MCF 10A (cell line): ENCODE measurements at regions of chr5 and their contacts with region 1.

Region 1: GRCh38 chr5:168291464-168291961 is at the start of gene WWC1:
- DNase-seq: peak; percentile 88
- H3K4me3 Mint-ChIP-seq: peak within 1 kb of the TSS; percentile 82
- H3K27ac Mint-ChIP-seq: peak within 1 kb of the TSS; percentile 81
- H3K4me1 Mint-ChIP-seq: peaks cover 51% of the 10 kb centered on the region
- H3K27me3 Mint-ChIP-seq: no peaks in the 10 kb centered on the region
- CTCF ChIP-seq: no peak
- total RNA-seq, gene WWC1: 27.8 and 47.0 TPM in 2 replicates

Region 2: DNA sequence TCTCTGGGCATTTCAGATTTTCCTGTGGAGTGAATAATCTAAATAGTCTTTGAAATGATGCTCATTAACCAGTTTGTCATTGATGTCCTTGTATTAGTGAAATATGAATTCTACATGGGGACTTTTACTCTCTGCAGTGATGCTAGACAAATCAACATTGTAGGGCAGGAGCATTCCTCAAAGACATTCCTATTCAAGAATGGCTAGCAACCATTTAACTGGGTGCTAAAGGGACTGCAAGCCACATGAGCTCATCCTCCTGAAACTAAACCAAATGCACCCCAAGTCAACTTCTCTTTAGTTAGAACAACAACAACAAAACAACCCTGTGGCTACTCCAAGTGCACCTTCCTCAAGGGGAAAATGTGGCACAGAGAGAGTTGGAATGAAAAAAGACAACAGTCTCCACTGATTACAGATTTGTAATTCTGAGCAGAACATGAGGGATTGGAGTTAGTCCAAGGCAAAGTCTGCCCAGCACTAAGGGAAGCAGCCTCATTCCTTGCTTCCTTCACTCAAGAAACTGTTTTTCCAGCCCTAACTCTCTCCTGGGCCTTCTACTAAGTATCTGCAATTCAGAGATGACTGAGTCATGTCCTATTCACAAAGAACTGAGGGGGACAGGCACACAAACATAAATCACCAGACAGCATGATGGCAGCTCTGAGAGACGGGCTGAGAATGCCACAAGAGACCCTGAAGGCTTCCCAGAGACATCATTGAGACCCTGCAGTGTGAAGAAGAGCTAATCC is 82.1 kb before region 1 on chr5:
- CTCF ChIA-PET with region 1: no interaction called
- POLR2A ChIA-PET with region 1: no interaction called
- intact Hi-C with region 1: no loop called
- DNase-seq: no peak
- H3K4me3 Mint-ChIP-seq: no peak overlapping the region
- H3K27ac Mint-ChIP-seq: no peak overlapping the region
- H3K4me1 Mint-ChIP-seq: no peaks in the 10 kb centered on the region
- H3K27me3 Mint-ChIP-seq: no peaks in the 10 kb centered on the region
- CTCF ChIP-seq: no peak

Region 3: GRCh38 chr5:168317521-168318147 is 26.1 kb after region 1 on chr5:
- CTCF ChIA-PET with region 1: interaction called, 8 read pairs
- POLR2A ChIA-PET with region 1: interaction called, 44 read pairs
- intact Hi-C with region 1: no loop called
- DNase-seq: peak; percentile 93
- H3K4me3 Mint-ChIP-seq: no peak overlapping the region
- H3K27ac Mint-ChIP-seq: peak overlapping the region; percentile 20
- H3K4me1 Mint-ChIP-seq: peaks cover 38% of the 10 kb centered on the region
- H3K27me3 Mint-ChIP-seq: no peaks in the 10 kb centered on the region
- CTCF ChIP-seq: no peak

Region 4: DNA sequence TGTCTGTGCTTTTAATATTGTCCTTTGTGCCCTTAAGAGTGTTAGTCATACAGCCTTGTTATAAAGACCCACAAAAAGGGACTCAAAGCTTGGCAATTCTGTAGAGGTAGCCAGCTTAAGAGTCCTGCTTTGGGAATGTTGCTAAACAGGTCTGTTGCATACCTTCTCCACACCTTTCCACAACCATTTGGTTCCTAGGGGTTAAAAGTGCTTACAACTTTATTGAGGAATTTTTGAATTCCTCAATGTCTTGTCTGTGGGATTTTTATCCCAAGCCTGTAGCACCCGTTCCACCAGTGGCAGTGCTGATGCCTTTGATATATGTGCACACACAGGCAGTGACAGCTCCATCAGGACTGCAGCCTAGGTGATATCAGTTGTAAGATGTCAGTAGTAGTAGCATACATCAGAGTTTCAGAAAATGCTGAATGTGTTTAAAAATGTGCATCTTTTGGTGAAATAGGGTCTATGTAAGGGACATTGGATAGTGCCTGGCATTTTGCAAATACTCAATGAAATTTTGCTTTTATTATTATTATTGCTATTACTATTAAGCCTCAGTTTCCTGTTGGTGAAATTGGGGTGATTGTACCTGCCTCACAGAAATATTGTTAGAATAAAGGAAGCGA is 68.4 kb after region 1 on chr5:
- CTCF ChIA-PET with region 1: interaction called, 29 read pairs
- POLR2A ChIA-PET with region 1: interaction called, 32 read pairs
- intact Hi-C with region 1: loop called (anchors 2 kb)
- DNase-seq: no peak
- H3K4me3 Mint-ChIP-seq: no peak overlapping the region
- H3K27ac Mint-ChIP-seq: no peak overlapping the region
- H3K4me1 Mint-ChIP-seq: peaks cover 17% of the 10 kb centered on the region
- H3K27me3 Mint-ChIP-seq: no peaks in the 10 kb centered on the region
- CTCF ChIP-seq: no peak

Region 5: DNA sequence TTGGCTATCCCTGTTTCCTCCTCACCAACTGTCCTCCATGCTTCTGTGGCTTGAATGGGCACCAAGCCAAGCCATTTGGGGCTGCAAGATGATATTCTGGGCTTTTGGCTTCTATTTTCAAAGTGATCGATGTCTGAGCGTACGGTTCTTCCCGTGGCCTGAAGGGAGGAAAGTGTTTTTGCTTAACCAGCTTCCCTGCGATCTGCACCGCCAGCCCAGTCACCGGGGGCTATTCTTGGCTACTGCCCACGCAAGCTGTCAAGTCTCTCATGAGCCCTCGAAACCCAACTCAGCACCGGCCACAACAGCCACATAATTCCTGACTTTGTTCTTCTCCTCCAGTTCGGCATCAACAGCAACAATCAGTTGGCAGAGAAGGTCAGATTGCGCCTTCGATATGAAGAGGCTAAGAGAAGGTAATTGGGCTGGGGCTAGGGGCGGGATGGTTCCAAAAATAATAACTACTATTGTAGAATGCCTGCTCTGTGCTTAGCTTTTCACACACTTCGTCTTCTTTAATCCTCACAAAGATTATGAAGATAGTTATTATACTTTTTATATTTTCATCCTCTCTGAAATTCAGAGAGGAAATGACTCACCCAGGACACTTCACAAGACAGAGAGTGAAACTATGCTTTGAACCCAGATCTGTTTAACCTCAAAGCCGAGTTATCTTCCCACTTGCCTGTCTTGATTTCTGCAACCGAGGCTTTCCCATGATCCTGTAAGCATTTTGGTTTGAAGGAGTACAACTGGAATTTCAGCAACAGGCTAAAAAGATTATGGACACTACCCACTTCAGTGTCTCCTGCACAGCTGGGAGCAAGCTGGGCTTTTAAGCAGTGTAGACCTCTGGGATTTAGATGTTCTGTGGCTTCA is 118.3 kb after region 1 on chr5:
- CTCF ChIA-PET with region 1: interaction called, 15 read pairs
- POLR2A ChIA-PET with region 1: interaction called, 19 read pairs
- intact Hi-C with region 1: loop called (anchors 2 kb)
- DNase-seq: peak; percentile 83
- H3K4me3 Mint-ChIP-seq: peak overlapping the region; percentile 28
- H3K27ac Mint-ChIP-seq: peak overlapping the region; percentile 78
- H3K4me1 Mint-ChIP-seq: peaks cover 49% of the 10 kb centered on the region
- H3K27me3 Mint-ChIP-seq: no peaks in the 10 kb centered on the region
- CTCF ChIP-seq: no peak

Region 6: GRCh38 chr5:168579488-168580226 is 288.1 kb after region 1 on chr5:
- CTCF ChIA-PET with region 1: interaction called, 3 read pairs
- POLR2A ChIA-PET with region 1: interaction called, 5 read pairs
- intact Hi-C with region 1: loop called (anchors 10 kb)
- DNase-seq: peak; percentile 100
- H3K4me3 Mint-ChIP-seq: peak overlapping the region; percentile 83
- H3K27ac Mint-ChIP-seq: peak overlapping the region; percentile 96
- H3K4me1 Mint-ChIP-seq: peaks cover 28% of the 10 kb centered on the region
- H3K27me3 Mint-ChIP-seq: no peaks in the 10 kb centered on the region
- CTCF ChIP-seq: no peak